GM12878 (cell line): ENCODE measurements at regions of chr17 and their contacts with region 1.

Region 1: GRCh38 chr17:76182016-76182764 is 41.1 kb upstream of the FOXJ1 start:
- DNase-seq: peak; percentile 94
- ATAC-seq: peak; percentile 83
- H3K4me3 ChIP-seq: no peak overlapping the region
- H3K27ac ChIP-seq: peak overlapping the region; percentile 24; the same call in 1 of the 2 replicates
- H3K4me1 ChIP-seq: peaks cover 30% of the 10 kb centered on the region
- H3K27me3 ChIP-seq: no peaks in the 10 kb centered on the region
- CTCF ChIP-seq: peak; percentile 83 to 97 (median 93); a peak in 5 of 6 replicates
- EP300 ChIP-seq: no peak
- POLR2A ChIP-seq: no peak
- RAD21 ChIP-seq: peak; percentile 81

Region 2: GRCh38 chr17:76132574-76133338 is 49.4 kb before region 1 on chr17:
- CTCF ChIA-PET with region 1: interaction called, 162 read pairs
- POLR2A ChIA-PET with region 1: interaction called, 4 read pairs
- RAD21 ChIA-PET with region 1: interaction called, 125 read pairs
- SMC1A ChIA-PET with region 1: interaction called, 77 read pairs
- in situ Hi-C with region 1: no loop called
- intact Hi-C with region 1: no loop called
- DNase-seq: no peak
- ATAC-seq: no peak
- H3K4me3 ChIP-seq: no peak overlapping the region
- H3K27ac ChIP-seq: no peak overlapping the region
- H3K4me1 ChIP-seq: peaks cover 5% of the 10 kb centered on the region
- H3K27me3 ChIP-seq: no peaks in the 10 kb centered on the region
- CTCF ChIP-seq: no peak
- EP300 ChIP-seq: no peak
- POLR2A ChIP-seq: no peak
- RAD21 ChIP-seq: no peak

Region 3: GRCh38 chr17:76152591-76152990 is 29.6 kb before region 1 on chr17:
- CTCF ChIA-PET with region 1: interaction called, 10 read pairs
- POLR2A ChIA-PET with region 1: no interaction called
- RAD21 ChIA-PET with region 1: interaction called, 6 read pairs
- SMC1A ChIA-PET with region 1: interaction called, 13 read pairs
- in situ Hi-C with region 1: no loop called
- intact Hi-C with region 1: no loop called
- DNase-seq: no peak
- ATAC-seq: no peak
- H3K4me3 ChIP-seq: no peak overlapping the region
- H3K27ac ChIP-seq: no peak overlapping the region
- H3K4me1 ChIP-seq: no peaks in the 10 kb centered on the region
- H3K27me3 ChIP-seq: no peaks in the 10 kb centered on the region
- CTCF ChIP-seq: no peak
- EP300 ChIP-seq: no peak
- POLR2A ChIP-seq: no peak
- RAD21 ChIP-seq: no peak

Region 4: DNA sequence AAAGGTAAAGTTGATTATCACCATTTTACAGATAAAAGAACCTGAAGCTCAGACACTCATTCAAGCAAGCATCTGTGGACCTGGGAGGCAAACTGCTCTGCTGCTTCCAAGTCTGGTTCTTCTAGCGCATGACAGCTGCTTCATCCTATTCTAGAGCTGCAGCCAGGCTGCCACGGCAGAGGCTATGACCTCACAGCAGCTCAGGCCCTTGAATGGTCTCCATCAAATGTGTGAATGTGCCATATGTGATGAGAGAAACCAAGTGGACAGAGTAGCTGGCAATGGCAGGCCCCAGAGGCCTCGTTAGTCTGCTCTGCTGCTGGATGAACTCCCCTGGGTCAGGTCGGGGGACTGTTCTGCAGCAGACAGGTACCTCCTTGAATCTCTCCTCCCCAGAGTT is 10.5 kb before region 1 on chr17:
- CTCF ChIA-PET with region 1: interaction called, 6 read pairs
- POLR2A ChIA-PET with region 1: interaction called, 4 read pairs
- RAD21 ChIA-PET with region 1: interaction called, 6 read pairs
- SMC1A ChIA-PET with region 1: interaction called, 22 read pairs
- in situ Hi-C with region 1: no loop called
- intact Hi-C with region 1: no loop called
- DNase-seq: no peak
- ATAC-seq: no peak
- H3K4me3 ChIP-seq: no peak overlapping the region
- H3K27ac ChIP-seq: no peak overlapping the region
- H3K4me1 ChIP-seq: no peaks in the 10 kb centered on the region
- H3K27me3 ChIP-seq: no peaks in the 10 kb centered on the region
- CTCF ChIP-seq: no peak
- EP300 ChIP-seq: no peak
- POLR2A ChIP-seq: no peak
- RAD21 ChIP-seq: no peak

Region 5: GRCh38 chr17:76246080-76247066 is 64.2 kb after region 1 on chr17:
- CTCF ChIA-PET with region 1: interaction called, 45 read pairs
- POLR2A ChIA-PET with region 1: interaction called, 11 read pairs
- RAD21 ChIA-PET with region 1: interaction called, 35 read pairs
- SMC1A ChIA-PET with region 1: interaction called, 22 read pairs
- in situ Hi-C with region 1: no loop called
- intact Hi-C with region 1: loop called (anchors 5 kb)
- DNase-seq: peak; percentile 98
- ATAC-seq: peak; percentile 100
- H3K4me3 ChIP-seq: no peak overlapping the region
- H3K27ac ChIP-seq: peak overlapping the region; percentile 80
- H3K4me1 ChIP-seq: peaks cover 34% of the 10 kb centered on the region
- H3K27me3 ChIP-seq: no peaks in the 10 kb centered on the region
- CTCF ChIP-seq: no peak
- EP300 ChIP-seq: peak; percentile 68 to 81
- POLR2A ChIP-seq: peak; percentile 83
- RAD21 ChIP-seq: 0 out of 2 replicates have a peak, but pooled peaks have one; percentile 1